ENCODE measurements at regions of chr1 and their contacts with region 1.

Region 1: GRCh38 chr1:87279966-87280535 is 48.6 kb upstream of the LMO4 start:
- DNase-seq: no peak
- ATAC-seq: peak; percentile 39
- H3K4me3 Mint-ChIP-seq: no peak overlapping the region
- H3K27ac Mint-ChIP-seq: no peak overlapping the region
- H3K4me1 Mint-ChIP-seq: no peaks in the 10 kb centered on the region
- H3K27me3 Mint-ChIP-seq: peaks cover 8% of the 10 kb centered on the region
- CTCF ChIP-seq: no peak

Region 2: GRCh38 chr1:87131809-87132283 is 148.2 kb before region 1 on chr1:
- CTCF ChIA-PET with region 1: interaction called, 3 read pairs
- POLR2A ChIA-PET with region 1: no interaction called
- intact Hi-C with region 1: loop called (anchors 10 kb)
- DNase-seq: peak; percentile 71
- ATAC-seq: peak; percentile 94
- H3K4me3 Mint-ChIP-seq: peak overlapping the region; percentile 71
- H3K27ac Mint-ChIP-seq: no peak overlapping the region
- H3K4me1 Mint-ChIP-seq: peaks cover 10% of the 10 kb centered on the region
- H3K27me3 Mint-ChIP-seq: peaks cover 22% of the 10 kb centered on the region
- CTCF ChIP-seq: peak; percentile 97

Region 3: GRCh38 chr1:87236585-87236984 is 43.5 kb before region 1 on chr1:
- CTCF ChIA-PET with region 1: no interaction called
- POLR2A ChIA-PET with region 1: no interaction called
- intact Hi-C with region 1: no loop called
- DNase-seq: no peak
- ATAC-seq: no peak
- H3K4me3 Mint-ChIP-seq: no peak overlapping the region
- H3K27ac Mint-ChIP-seq: no peak overlapping the region
- H3K4me1 Mint-ChIP-seq: no peaks in the 10 kb centered on the region
- H3K27me3 Mint-ChIP-seq: peaks cover 12% of the 10 kb centered on the region
- CTCF ChIP-seq: no peak

Region 4: GRCh38 chr1:87292684-87293493 is 12.8 kb after region 1 on chr1:
- CTCF ChIA-PET with region 1: interaction called, 16 read pairs
- POLR2A ChIA-PET with region 1: no interaction called
- intact Hi-C with region 1: no loop called
- DNase-seq: peak; percentile 81
- ATAC-seq: peak; percentile 64
- H3K4me3 Mint-ChIP-seq: no peak overlapping the region
- H3K27ac Mint-ChIP-seq: no peak overlapping the region
- H3K4me1 Mint-ChIP-seq: no peaks in the 10 kb centered on the region
- H3K27me3 Mint-ChIP-seq: peaks cover 3% of the 10 kb centered on the region
- CTCF ChIP-seq: peak; percentile 81